Panc1 (cell line): ENCODE measurements at regions of chr9 and their contacts with region 1.

Region 1: GRCh38 chr9:36127652-36128244 is 8.8 kb upstream of the GLIPR2 start:
- DNase-seq: no peak
- ATAC-seq: no peak
- H3K4me3 ChIP-seq: no peak overlapping the region
- H3K27ac ChIP-seq: no peak overlapping the region
- H3K4me1 ChIP-seq: no peaks in the 10 kb centered on the region
- H3K27me3 ChIP-seq: no peaks in the 10 kb centered on the region
- CTCF ChIP-seq: no peak

Region 2: DNA sequence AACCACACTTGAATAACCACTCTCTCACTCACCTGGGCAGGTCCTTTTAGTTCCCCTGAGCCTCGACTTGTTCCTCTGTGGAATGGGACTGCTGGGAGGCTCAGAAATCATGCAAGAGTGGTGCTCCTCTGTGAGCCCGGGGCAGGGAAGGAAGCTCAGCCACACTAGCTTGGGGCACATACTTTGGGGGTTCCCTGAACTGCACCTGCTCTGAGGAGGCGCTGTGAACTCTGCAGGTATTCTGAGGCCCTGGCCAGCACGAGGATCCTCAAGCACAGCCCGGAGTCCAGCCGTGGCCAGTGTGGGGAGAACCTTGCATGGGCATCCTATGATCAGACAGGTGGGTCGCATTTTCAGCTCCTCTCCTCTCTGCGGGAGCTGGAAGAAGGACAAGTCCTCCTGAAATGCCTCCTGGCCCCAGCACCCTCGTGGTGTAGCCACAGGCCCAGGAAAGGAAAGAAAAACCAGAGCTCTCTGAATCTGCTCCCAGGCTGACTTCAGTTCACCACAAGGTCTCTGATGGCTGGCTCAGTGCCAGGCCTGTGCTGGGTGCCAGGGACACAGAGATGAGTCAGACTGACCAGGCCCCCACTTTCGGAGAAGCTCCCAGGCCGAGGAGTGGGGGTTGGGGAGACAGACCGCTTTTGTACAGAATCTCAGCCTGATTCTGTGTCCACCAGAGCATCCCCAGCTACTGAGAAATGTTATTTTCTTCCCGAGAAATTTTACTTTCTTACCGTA is 20.7 kb after region 1 on chr9:
- CTCF ChIA-PET with region 1: no interaction called
- POLR2A ChIA-PET with region 1: no interaction called
- in situ Hi-C with region 1: no loop called
- intact Hi-C with region 1: no loop called
- DNase-seq: no peak
- ATAC-seq: peak; percentile 59
- H3K4me3 ChIP-seq: no peak overlapping the region
- H3K27ac ChIP-seq: no peak overlapping the region
- H3K4me1 ChIP-seq: peaks cover 6% of the 10 kb centered on the region
- H3K27me3 ChIP-seq: no peaks in the 10 kb centered on the region
- CTCF ChIP-seq: no peak

Region 3: DNA sequence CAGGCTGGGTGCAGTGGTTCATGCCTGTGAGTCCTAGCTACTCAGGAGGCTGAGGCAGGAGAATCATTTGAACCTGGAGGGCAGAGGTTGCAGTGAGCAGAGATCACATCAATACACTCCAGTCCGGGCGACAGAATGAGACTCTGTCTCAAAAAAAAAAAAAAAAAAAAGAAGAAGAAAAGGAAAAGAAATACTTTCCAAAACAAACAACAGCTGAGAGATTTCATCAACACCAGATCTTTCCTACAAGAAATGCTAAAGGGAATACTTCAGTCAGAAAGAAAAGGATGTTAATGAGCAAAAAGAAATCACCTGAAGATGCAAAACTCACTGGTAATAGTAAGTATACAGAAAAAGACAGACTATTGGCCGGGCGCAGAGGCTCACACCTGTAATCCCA is 49.8 kb after region 1 on chr9:
- CTCF ChIA-PET with region 1: no interaction called
- POLR2A ChIA-PET with region 1: interaction called, 13 read pairs
- in situ Hi-C with region 1: no loop called
- intact Hi-C with region 1: no loop called
- DNase-seq: no peak
- ATAC-seq: no peak
- H3K4me3 ChIP-seq: no peak overlapping the region
- H3K27ac ChIP-seq: no peak overlapping the region
- H3K4me1 ChIP-seq: no peaks in the 10 kb centered on the region
- H3K27me3 ChIP-seq: no peaks in the 10 kb centered on the region
- CTCF ChIP-seq: no peak

Region 4: GRCh38 chr9:36190388-36191287 is 62.9 kb after region 1 on chr9 and contains the start of gene CLTA:
- CTCF ChIA-PET with region 1: no interaction called
- POLR2A ChIA-PET with region 1: interaction called, 13 read pairs
- in situ Hi-C with region 1: no loop called
- intact Hi-C with region 1: no loop called
- DNase-seq: peak; percentile 99
- ATAC-seq: peak; percentile 99
- H3K4me3 ChIP-seq: peak within 1 kb of the TSS; percentile 78 to 97
- H3K27ac ChIP-seq: peak within 1 kb of the TSS; percentile 99
- H3K4me1 ChIP-seq: peaks cover 30% of the 10 kb centered on the region
- H3K27me3 ChIP-seq: no peaks in the 10 kb centered on the region
- CTCF ChIP-seq: no peak
- total RNA-seq, gene CLTA: 760 TPM